PC-3 (cell line): ENCODE measurements at regions of chr9 and their contacts with region 1.

Region 1: DNA sequence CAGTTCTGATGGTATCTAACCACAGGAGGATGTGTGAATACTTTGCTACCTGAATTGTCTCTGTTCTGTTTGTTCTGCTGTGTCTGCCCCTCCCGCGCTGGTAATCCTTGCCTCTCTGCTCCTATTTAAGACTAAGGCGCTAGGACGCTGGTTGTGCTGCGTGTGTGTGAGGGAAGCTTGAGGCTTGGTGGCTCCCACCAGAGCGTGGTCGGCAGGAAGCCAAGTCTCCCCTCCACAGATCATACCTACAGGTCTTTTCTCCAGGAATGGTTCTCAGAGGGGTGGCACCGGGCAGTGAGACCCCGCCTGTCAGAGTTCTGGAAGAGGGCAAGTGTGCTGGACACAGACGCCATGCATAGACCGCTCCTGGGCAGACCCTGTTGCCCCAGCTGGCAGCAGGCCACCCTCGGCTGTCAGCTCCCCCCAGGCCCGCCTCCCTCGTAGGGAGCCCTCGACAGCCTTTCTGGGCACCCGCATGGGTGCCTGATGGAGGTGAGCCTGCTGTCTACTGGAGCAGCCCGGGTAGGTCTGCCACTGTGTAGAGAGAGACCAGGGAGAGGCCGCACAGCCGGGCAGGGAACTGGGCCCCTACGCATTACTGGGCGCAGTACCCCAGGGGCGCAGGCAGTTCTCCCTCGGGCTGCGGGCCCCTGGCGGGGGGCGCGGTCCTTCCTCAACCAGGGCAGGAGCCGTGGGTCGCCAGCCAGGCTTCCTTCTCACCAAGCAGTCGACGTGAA is 53.4 kb upstream of the ROR2 start:
- DNase-seq: no peak
- ATAC-seq: no peak
- H3K4me3 ChIP-seq: no peak overlapping the region
- H3K27ac ChIP-seq: no peak overlapping the region
- H3K4me1 ChIP-seq: no peaks in the 10 kb centered on the region
- H3K27me3 ChIP-seq: 0 out of 2 replicates have a peak, but pooled peaks cover 9% of the 10 kb centered on the region
- CTCF ChIP-seq: no peak

Region 2: DNA sequence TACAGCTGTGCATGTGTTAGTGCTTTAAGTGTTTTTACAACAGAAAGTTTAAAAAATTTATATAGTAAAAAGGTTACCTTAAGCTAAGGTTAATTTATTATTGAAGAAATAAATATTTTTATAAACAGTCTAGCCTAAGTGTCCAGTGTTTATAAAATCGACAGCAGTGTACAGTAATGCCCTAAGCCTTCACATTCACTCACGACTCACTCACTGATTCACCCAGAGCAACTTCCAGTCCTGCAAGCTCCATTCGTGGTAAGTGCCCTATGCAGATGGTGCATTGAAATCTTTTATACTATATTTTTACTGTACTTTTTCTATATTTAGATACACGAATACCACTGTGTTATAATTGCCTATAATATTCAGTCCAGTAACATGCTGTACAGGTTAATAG is 212.6 kb before region 1 on chr9:
- CTCF ChIA-PET with region 1: no interaction called
- POLR2A ChIA-PET with region 1: no interaction called
- intact Hi-C with region 1: no loop called
- DNase-seq: peak; percentile 3
- ATAC-seq: no peak
- H3K4me3 ChIP-seq: no peak overlapping the region
- H3K27ac ChIP-seq: no peak overlapping the region
- H3K4me1 ChIP-seq: peaks cover 6% of the 10 kb centered on the region; the same call in 1 of the 2 replicates
- H3K27me3 ChIP-seq: peaks cover 13% of the 10 kb centered on the region
- CTCF ChIP-seq: no peak

Region 3: GRCh38 chr9:91992461-91993041 is 10.9 kb before region 1 on chr9:
- CTCF ChIA-PET with region 1: no interaction called
- POLR2A ChIA-PET with region 1: interaction called, 20 read pairs
- intact Hi-C with region 1: no loop called
- DNase-seq: no peak
- ATAC-seq: no peak
- H3K4me3 ChIP-seq: no peak overlapping the region
- H3K27ac ChIP-seq: no peak overlapping the region
- H3K4me1 ChIP-seq: no peaks in the 10 kb centered on the region
- H3K27me3 ChIP-seq: peaks cover 27% of the 10 kb centered on the region; the same call in 1 of the 2 replicates
- CTCF ChIP-seq: no peak